IMR-90 (cell line): ENCODE measurements at regions of chr12 and their contacts with region 1.

Region 1: DNA sequence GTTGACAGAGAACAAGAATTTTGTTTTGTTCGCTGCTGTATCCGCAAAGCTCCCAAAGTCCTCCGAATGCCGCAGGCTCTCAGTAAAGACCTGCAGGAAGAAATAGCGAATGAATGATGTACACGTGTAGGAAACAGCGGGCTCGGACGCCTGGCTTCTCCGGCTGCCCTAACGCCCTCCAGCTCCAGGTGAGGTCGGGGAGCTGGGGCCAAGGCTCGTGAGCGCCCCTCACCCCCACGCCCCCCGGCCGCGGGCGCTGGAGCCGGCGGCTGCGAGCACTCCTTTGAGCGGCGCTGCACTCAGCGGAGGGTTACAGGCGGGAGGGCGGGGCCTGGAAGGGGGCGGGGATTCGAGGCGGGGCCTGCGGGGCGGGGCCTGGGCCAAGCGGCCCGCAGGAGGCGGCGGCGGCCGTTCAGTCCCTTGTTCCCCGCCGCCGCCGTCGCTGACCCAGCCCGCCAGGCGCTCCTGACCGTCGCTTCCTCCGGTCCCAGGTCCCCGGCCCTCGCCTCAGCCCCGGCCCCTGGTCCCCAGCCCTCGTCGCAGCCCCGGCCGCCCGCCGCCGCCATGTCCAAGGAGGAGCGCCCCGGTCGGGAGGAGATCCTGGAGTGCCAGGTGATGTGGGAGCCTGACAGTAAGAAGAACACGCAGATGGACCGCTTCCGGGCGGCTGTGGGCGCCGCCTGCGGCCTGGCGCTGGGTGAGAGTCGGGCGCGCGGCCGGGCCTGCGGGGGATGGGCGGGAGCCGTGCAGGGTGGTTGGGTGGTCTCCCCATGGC is at the start of gene AACS:
- DNase-seq: peak; percentile 64
- ATAC-seq: peak; percentile 99
- H3K4me3 ChIP-seq: peak within 1 kb of the TSS; percentile 90
- H3K27ac ChIP-seq: peak within 1 kb of the TSS; percentile 42; the same call in 1 of the 2 replicates
- H3K4me1 ChIP-seq: peaks cover 3% of the 10 kb centered on the region
- H3K27me3 ChIP-seq: no peaks in the 10 kb centered on the region
- CTCF ChIP-seq: no peak
- POLR2A ChIP-seq: peak; percentile 67; the same call in 1 of the 2 replicates
- RAD21 ChIP-seq: no peak
- total RNA-seq, gene AACS: 21.1 and 22.0 TPM in 2 replicates

Region 2: GRCh38 chr12:124655048-124655697 is 410.0 kb before region 1 on chr12:
- CTCF ChIA-PET with region 1: no interaction called
- POLR2A ChIA-PET with region 1: no interaction called
- dilution Hi-C with region 1: no loop called
- in situ Hi-C with region 1: no loop called
- intact Hi-C with region 1: no loop called
- DNase-seq: peak; percentile 62
- ATAC-seq: peak; percentile 64
- H3K4me3 ChIP-seq: no peak overlapping the region
- H3K27ac ChIP-seq: peak overlapping the region; percentile 95
- H3K4me1 ChIP-seq: peaks cover 25% of the 10 kb centered on the region
- H3K27me3 ChIP-seq: no peaks in the 10 kb centered on the region
- CTCF ChIP-seq: no peak
- POLR2A ChIP-seq: no peak
- RAD21 ChIP-seq: no peak

Region 3: GRCh38 chr12:124964836-124965462 is 100.3 kb before region 1 on chr12:
- CTCF ChIA-PET with region 1: no interaction called
- POLR2A ChIA-PET with region 1: no interaction called
- dilution Hi-C with region 1: no loop called
- in situ Hi-C with region 1: no loop called
- intact Hi-C with region 1: no loop called
- DNase-seq: no peak
- ATAC-seq: no peak
- H3K4me3 ChIP-seq: no peak overlapping the region
- H3K27ac ChIP-seq: no peak overlapping the region
- H3K4me1 ChIP-seq: no peaks in the 10 kb centered on the region
- H3K27me3 ChIP-seq: no peaks in the 10 kb centered on the region
- CTCF ChIP-seq: no peak
- POLR2A ChIP-seq: no peak
- RAD21 ChIP-seq: no peak

Region 4: GRCh38 chr12:124992874-124993625 is 72.2 kb before region 1 on chr12:
- CTCF ChIA-PET with region 1: no interaction called
- POLR2A ChIA-PET with region 1: no interaction called
- dilution Hi-C with region 1: no loop called
- in situ Hi-C with region 1: no loop called
- intact Hi-C with region 1: loop called (anchors 5 kb)
- DNase-seq: peak; percentile 24
- ATAC-seq: no peak; the same call in 1 of the 2 replicates
- H3K4me3 ChIP-seq: peak overlapping the region; percentile 77
- H3K27ac ChIP-seq: no peak overlapping the region
- H3K4me1 ChIP-seq: peaks cover 9% of the 10 kb centered on the region
- H3K27me3 ChIP-seq: no peaks in the 10 kb centered on the region
- CTCF ChIP-seq: no peak
- POLR2A ChIP-seq: no peak
- RAD21 ChIP-seq: no peak

Region 5: DNA sequence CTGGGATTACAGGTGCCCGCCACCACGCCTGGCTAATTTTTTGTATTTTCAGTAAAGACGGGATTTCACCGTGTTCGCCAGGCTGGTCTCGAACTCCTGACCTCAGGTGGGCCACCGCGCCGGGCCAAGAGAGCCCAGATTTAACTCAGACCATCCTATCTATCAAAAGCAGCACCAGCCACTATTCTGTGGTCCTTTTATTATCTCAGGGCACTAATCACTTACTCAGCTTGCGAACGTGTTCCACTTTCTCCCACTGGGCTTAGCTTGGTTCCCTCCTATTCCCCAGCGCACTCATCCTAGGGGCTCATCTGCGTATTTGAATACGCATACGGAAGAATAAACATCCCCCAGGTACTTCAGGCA is 16.1 kb before region 1 on chr12:
- CTCF ChIA-PET with region 1: interaction called, 5 read pairs
- POLR2A ChIA-PET with region 1: interaction called, 3 read pairs
- dilution Hi-C with region 1: no loop called
- in situ Hi-C with region 1: no loop called
- intact Hi-C with region 1: loop called (anchors 2 kb)
- DNase-seq: no peak
- ATAC-seq: peak; percentile 13
- H3K4me3 ChIP-seq: peak overlapping the region; percentile 71
- H3K27ac ChIP-seq: no peak overlapping the region
- H3K4me1 ChIP-seq: no peaks in the 10 kb centered on the region
- H3K27me3 ChIP-seq: no peaks in the 10 kb centered on the region
- CTCF ChIP-seq: no peak
- POLR2A ChIP-seq: no peak
- RAD21 ChIP-seq: no peak